Endothelial cell of umbilical vein (primary cell): ENCODE measurements at regions of chr2 and their contacts with region 1.

Region 1: GRCh38 chr2:71530641-71531332 is 77.4 kb downstream of the DYSF start:
- DNase-seq: peak; percentile 64
- H3K4me3 ChIP-seq: no peak overlapping the region
- H3K27ac ChIP-seq: peak overlapping the region; percentile 40
- H3K4me1 ChIP-seq: peaks cover 7% of the 10 kb centered on the region
- H3K27me3 ChIP-seq: no peaks in the 10 kb centered on the region
- CTCF ChIP-seq: peak; percentile 64 to 67
- POLR2A ChIP-seq: no peak

Region 2: DNA sequence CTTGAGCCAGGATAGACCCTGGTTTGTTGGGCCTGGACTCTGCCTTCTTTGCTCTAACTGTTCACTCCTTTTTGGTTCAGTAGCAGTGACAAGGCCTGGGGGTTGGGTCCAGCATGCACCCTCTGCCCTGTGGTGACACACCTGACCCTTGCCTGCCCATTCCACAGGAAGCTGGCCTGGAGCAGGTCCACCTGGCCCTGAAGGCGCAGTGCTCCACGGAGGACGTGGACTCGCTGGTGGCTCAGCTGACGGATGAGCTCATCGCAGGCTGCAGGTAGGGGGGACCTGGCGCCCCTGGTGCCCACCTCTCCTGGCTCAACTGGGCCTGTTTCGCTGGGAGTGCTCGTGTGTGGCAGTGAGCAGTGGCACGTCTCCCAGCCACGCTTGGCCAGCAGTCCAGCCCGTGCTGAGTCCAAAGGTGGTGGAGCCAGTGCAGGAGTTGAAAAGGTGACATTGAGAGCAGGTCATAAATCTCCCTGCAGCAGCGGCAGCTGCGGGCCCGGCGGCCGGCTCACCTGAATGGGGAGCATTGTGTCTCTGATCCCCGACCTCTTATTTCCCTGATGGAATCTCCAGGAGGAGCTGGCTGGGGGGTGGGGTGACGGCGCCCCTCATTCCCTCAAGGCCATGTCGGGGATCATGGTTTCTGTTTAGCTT is 25.1 kb after region 1 on chr2:
- CTCF ChIA-PET with region 1: interaction called, 11 read pairs
- POLR2A ChIA-PET with region 1: no interaction called
- dilution Hi-C with region 1: no loop called
- intact Hi-C with region 1: no loop called
- DNase-seq: no peak
- H3K4me3 ChIP-seq: no peak overlapping the region
- H3K27ac ChIP-seq: no peak overlapping the region
- H3K4me1 ChIP-seq: peaks cover 10% of the 10 kb centered on the region
- H3K27me3 ChIP-seq: no peaks in the 10 kb centered on the region
- CTCF ChIP-seq: no peak
- POLR2A ChIP-seq: no peak

Region 3: GRCh38 chr2:71566372-71566771 is 35.6 kb after region 1 on chr2:
- CTCF ChIA-PET with region 1: no interaction called
- POLR2A ChIA-PET with region 1: no interaction called
- dilution Hi-C with region 1: no loop called
- intact Hi-C with region 1: no loop called
- DNase-seq: no peak
- H3K4me3 ChIP-seq: no peak overlapping the region
- H3K27ac ChIP-seq: no peak overlapping the region
- H3K4me1 ChIP-seq: no peaks in the 10 kb centered on the region
- H3K27me3 ChIP-seq: no peaks in the 10 kb centered on the region
- CTCF ChIP-seq: no peak
- POLR2A ChIP-seq: no peak

Region 4: GRCh38 chr2:71609958-71610357 is 79.2 kb after region 1 on chr2:
- CTCF ChIA-PET with region 1: no interaction called
- POLR2A ChIA-PET with region 1: no interaction called
- dilution Hi-C with region 1: no loop called
- intact Hi-C with region 1: no loop called
- DNase-seq: peak; percentile 42
- H3K4me3 ChIP-seq: no peak overlapping the region
- H3K27ac ChIP-seq: peak overlapping the region; percentile 59
- H3K4me1 ChIP-seq: peaks cover 32% of the 10 kb centered on the region
- H3K27me3 ChIP-seq: no peaks in the 10 kb centered on the region
- CTCF ChIP-seq: peak in 1 of 2 donors; percentile 27
- POLR2A ChIP-seq: no peak